ENCODE measurements at regions of chr5 and their contacts with region 1.

Region 1: GRCh38 chr5:168502563-168503237 is 16.4 kb downstream of the RARS1 start:
- DNase-seq: no peak
- H3K4me3 ChIP-seq: no peak overlapping the region
- H3K27ac ChIP-seq: no peak overlapping the region
- H3K4me1 ChIP-seq: no peaks in the 10 kb centered on the region
- H3K27me3 ChIP-seq: no peaks in the 10 kb centered on the region
- CTCF ChIP-seq: no peak

Region 2: DNA sequence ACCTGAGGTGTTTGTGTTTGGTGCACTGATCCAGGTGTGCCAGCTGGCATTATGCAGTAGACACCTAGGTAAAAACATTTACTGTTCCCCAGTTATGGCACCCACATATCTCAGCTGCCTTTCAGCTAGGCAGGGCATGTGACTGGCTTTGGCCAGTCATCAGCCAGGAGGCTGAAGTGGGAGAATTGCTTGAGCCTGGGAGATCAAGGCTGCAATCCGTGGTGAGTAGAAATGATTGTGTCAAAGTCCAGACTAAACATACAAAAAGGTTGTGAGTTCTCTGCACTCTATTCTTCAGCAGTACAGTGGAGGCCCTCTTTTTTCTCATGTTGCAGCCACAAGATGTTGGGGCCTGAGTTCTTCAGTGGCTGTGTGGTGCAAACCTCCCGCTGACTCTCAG is 23.2 kb after region 1 on chr5:
- CTCF ChIA-PET with region 1: no interaction called
- POLR2A ChIA-PET with region 1: interaction called, 10 read pairs
- intact Hi-C with region 1: no loop called
- DNase-seq: no peak
- H3K4me3 ChIP-seq: no peak overlapping the region
- H3K27ac ChIP-seq: no peak overlapping the region
- H3K4me1 ChIP-seq: no peaks in the 10 kb centered on the region
- H3K27me3 ChIP-seq: no peaks in the 10 kb centered on the region
- CTCF ChIP-seq: no peak

Measured in PC-9 (cell line).